ENCODE measurements at regions of chr1 and their contacts with region 1.

Region 1: GRCh38 chr1:162587347-162587746 is 25.8 kb downstream of the UAP1 start:
- DNase-seq: no peak
- H3K4me3 ChIP-seq: no peak overlapping the region
- H3K27ac ChIP-seq: no peak overlapping the region
- H3K4me1 ChIP-seq: no peaks in the 10 kb centered on the region
- H3K27me3 ChIP-seq: no peaks in the 10 kb centered on the region
- CTCF ChIP-seq: no peak
- POLR2A ChIP-seq: no peak

Region 2: DNA sequence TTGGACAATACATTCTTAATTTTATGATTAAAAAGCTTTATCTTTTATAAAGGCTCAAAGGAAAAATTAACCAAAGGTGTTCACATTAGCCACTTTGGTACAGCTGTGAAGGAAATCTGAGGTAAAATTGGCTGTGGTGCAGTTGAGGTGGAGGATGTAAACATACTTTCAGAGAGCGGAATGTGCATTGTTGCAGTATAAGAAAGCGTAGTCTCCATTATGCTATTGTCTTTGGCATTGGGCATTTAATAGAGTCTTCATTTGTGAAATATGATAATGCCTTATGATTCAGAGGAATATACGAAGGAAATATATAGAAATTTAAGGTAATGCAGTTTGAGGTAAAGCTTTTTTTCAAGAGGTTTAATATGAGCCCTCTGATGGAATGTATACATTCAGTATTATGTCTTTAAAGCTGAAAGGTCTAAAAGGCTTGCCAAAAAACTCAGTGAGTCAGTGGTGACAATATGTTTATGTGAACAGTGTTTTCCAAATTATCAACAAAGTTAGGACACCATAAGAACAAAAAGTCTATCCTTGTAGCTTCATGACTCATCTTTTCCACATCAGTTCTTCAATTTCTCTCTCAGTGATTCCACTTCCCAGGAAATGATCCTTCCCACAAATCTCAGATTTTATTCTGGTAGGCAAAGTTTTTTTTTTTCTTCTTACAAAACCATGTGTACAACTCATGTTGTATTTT is 18.0 kb after region 1 on chr1:
- CTCF ChIA-PET with region 1: interaction called, 5 read pairs
- POLR2A ChIA-PET with region 1: no interaction called
- dilution Hi-C with region 1: no loop called
- intact Hi-C with region 1: loop called (anchors 2 kb)
- DNase-seq: peak; percentile 94
- H3K4me3 ChIP-seq: no peak overlapping the region
- H3K27ac ChIP-seq: peak overlapping the region; percentile 87
- H3K4me1 ChIP-seq: peaks cover 20% of the 10 kb centered on the region
- H3K27me3 ChIP-seq: no peaks in the 10 kb centered on the region
- CTCF ChIP-seq: no peak
- POLR2A ChIP-seq: peak; percentile 43